Ascending aorta (tissue), 2 donors: ENCODE measurements at regions of chr14 and their contacts with region 1.

Region 1: GRCh38 chr14:96424109-96424989 is 32.4 kb downstream of the AK7 start:
- DNase-seq: no peak
- H3K4me3 ChIP-seq: peak overlapping the region; percentile 43 to 59
- H3K27ac ChIP-seq: no peak overlapping the region
- H3K4me1 ChIP-seq: peaks cover 0 to 2% of the 10 kb centered on the region in 2 donors
- H3K27me3 ChIP-seq: no peaks in the 10 kb centered on the region
- CTCF ChIP-seq: peak; percentile 67 to 78 (median 77)

Region 2: DNA sequence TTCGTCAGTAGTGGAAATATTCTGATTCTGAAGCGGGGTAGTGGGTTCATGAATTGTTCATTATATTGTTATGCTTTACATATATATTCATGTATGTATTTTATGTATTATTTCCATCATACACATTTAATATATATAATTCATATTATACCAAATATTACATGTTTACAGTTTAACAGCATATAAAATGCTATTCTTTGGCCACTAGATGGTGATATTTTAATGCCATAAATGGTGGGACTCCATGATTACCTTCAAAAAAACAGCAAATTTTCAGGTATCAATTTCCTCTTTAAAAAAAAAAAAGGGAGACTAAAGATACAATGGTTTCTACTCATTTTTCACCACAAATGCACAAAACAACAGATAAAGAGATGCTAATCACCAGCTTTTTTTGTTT is 127.3 kb before region 1 on chr14:
- intact Hi-C with region 1: loop called (anchors 1 kb)
- DNase-seq: no peak
- H3K4me3 ChIP-seq: no peak overlapping the region
- H3K27ac ChIP-seq: no peak overlapping the region
- H3K4me1 ChIP-seq: no peaks in the 10 kb centered on the region
- H3K27me3 ChIP-seq: no peaks in the 10 kb centered on the region
- CTCF ChIP-seq: peak in 2 of 3 experiments; percentile 34 to 46